Ovary (tissue), 10 donors: ENCODE measurements at regions of chr12 and their contacts with region 1.

Region 1: GRCh38 chr12:575948-576612 is 87.2 kb downstream of the NINJ2 start:
- DNase-seq: peak; percentile 63 to 89 (median 80)
- H3K4me3 ChIP-seq: no peak overlapping the region
- H3K27ac ChIP-seq: peak overlapping the region in 1 of 2 donors; percentile 53
- H3K4me1 ChIP-seq: peaks cover 13% of the 10 kb centered on the region
- H3K27me3 ChIP-seq: no peaks in the 10 kb centered on the region
- CTCF ChIP-seq: peak; percentile 98 to 99 (median 98)
- EP300 ChIP-seq: no peak
- POLR2A ChIP-seq: no peak

Region 2: GRCh38 chr12:642633-643474 is 66.8 kb after region 1 on chr12:
- intact Hi-C with region 1: loop called in 3 of 4 experiments (anchors 10 kb)
- DNase-seq: peak; percentile 77 to 86 (median 78)
- H3K4me3 ChIP-seq: peak overlapping the region; percentile 65
- H3K27ac ChIP-seq: peak overlapping the region; percentile 84 to 89
- H3K4me1 ChIP-seq: peaks cover 19% of the 10 kb centered on the region
- H3K27me3 ChIP-seq: no peaks in the 10 kb centered on the region
- CTCF ChIP-seq: no peak
- EP300 ChIP-seq: no peak
- POLR2A ChIP-seq: no peak

Region 3: GRCh38 chr12:810671-811415 is 234.8 kb after region 1 on chr12:
- intact Hi-C with region 1: loop called (anchors 5 kb)
- DNase-seq: no peak
- H3K4me3 ChIP-seq: no peak overlapping the region
- H3K27ac ChIP-seq: no peak overlapping the region
- H3K4me1 ChIP-seq: peaks cover 3% of the 10 kb centered on the region
- H3K27me3 ChIP-seq: no peaks in the 10 kb centered on the region
- CTCF ChIP-seq: no peak
- EP300 ChIP-seq: no peak
- POLR2A ChIP-seq: no peak

Region 4: DNA sequence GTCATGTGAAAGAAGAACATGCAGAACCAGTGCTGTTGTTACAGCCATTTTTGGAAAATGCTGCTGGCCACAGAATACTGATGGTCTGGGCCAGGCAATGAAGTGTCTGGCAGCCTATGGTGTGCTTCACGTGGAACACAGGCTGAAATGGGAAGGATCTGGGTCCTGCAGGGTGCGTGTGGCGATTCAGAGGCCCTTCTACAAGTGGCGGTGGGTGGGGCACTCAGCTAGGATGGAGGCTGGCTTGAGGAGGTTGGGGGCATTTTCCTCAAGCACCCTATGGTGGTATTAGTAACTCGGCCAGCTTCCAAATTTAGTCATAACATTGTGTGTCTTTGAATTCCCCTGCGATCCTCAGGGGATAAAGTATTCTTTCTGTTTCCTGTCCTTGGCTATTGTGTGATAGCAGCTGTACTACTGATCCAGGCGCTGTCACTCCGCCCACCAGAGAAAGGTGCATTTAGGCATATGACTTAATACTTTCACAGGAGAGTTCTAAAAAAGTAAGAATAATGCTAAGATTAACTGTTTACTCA is 382.6 kb after region 1 on chr12:
- intact Hi-C with region 1: no loop called
- DNase-seq: no peak
- H3K4me3 ChIP-seq: no peak overlapping the region
- H3K27ac ChIP-seq: no peak overlapping the region
- H3K4me1 ChIP-seq: no peaks in the 10 kb centered on the region
- H3K27me3 ChIP-seq: no peaks in the 10 kb centered on the region
- CTCF ChIP-seq: no peak
- EP300 ChIP-seq: no peak
- POLR2A ChIP-seq: no peak

Region 5: DNA sequence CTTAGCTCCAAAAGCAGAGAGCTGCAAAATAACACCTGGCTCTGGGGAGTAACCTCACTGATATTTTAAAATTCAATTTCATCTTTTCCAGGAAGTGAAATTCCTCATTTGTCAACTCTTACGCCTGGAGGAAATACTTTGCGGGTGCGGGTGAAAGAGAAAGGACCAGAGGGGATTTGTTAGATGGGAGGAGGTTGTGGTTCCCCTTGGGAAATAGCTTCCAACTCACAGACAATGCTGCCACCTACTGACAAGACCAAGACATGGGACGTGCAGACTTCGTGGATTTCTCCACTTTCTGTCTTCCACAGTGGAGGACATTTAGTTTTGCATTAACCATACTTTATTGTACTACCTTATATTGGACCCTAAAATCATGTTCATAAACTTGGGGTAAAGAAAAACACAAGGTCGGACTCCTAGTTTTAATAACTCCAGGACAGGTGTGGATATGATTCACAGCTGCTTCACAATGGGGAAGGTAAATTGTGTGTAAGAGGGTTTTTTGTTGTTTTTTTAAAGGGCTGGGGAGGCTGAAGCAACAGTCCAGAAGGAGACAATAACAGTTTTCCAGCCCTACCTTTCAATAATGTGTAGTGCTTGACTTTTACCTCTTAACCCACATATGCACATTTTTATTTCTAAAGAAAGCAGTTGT is 1007.5 kb after region 1 on chr12:
- intact Hi-C with region 1: loop called in 1 of 4 experiments (anchors 5 kb)
- DNase-seq: peak; percentile 59 to 81 (median 66)
- H3K4me3 ChIP-seq: no peak overlapping the region
- H3K27ac ChIP-seq: no peak overlapping the region
- H3K4me1 ChIP-seq: no peaks in the 10 kb centered on the region
- H3K27me3 ChIP-seq: no peaks in the 10 kb centered on the region
- CTCF ChIP-seq: peak; percentile 77 to 91 (median 81)
- EP300 ChIP-seq: no peak
- POLR2A ChIP-seq: no peak

Region 6: GRCh38 chr12:1594261-1595025 is 1018.4 kb after region 1 on chr12 and contains the start of gene FBXL14:
- intact Hi-C with region 1: loop called in 1 of 4 experiments (anchors 10 kb)
- DNase-seq: peak; percentile 89 to 93 (median 92)
- H3K4me3 ChIP-seq: peak within 1 kb of the TSS; percentile 68
- H3K27ac ChIP-seq: peak within 1 kb of the TSS; percentile 86 to 87
- H3K4me1 ChIP-seq: peaks cover 18% of the 10 kb centered on the region
- H3K27me3 ChIP-seq: no peaks in the 10 kb centered on the region
- CTCF ChIP-seq: peak in 1 of 3 donors; percentile 13
- EP300 ChIP-seq: peak; percentile 30
- POLR2A ChIP-seq: peak; percentile 34
- total RNA-seq, gene FBXL14: 8.3 to 16.2 (median 12.0) TPM